Colonic mucosa (tissue), 4 donors: ENCODE measurements at regions of chr4 and their contacts with region 1.

Region 1: GRCh38 chr4:40311811-40312346 is 23.3 kb upstream of the CHRNA9 start:
- DNase-seq: no peak
- H3K4me3 ChIP-seq: no peak overlapping the region
- H3K27ac ChIP-seq: no peak overlapping the region
- H3K4me1 ChIP-seq: peaks cover 4% of the 10 kb centered on the region
- H3K27me3 ChIP-seq: no peaks in the 10 kb centered on the region
- CTCF ChIP-seq: no peak

Region 2: DNA sequence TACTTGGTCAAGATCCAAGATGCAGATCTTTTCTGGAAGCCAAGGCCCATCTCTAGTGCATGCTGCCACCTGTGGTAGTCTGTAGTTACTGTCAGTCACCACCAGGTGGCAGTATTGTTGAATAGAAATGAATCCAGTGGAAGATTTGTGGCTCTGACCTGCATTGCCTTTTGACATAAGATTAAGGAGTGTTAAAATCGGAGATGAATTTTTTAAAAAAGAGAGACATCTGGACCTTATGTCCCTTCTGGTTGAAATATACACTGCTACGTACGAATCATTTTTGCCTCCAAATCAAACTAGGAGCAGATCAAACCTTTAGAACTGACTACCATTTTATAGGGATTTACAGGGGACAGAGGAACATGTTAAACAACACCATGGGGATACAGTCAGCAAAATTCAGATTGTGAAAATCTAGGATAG is 161.9 kb before region 1 on chr4:
- intact Hi-C with region 1: loop called (anchors 2 kb)
- DNase-seq: peak; percentile 78
- H3K4me3 ChIP-seq: no peak overlapping the region
- H3K27ac ChIP-seq: no peak overlapping the region
- H3K4me1 ChIP-seq: no peaks in the 10 kb centered on the region
- H3K27me3 ChIP-seq: no peaks in the 10 kb centered on the region
- CTCF ChIP-seq: peak; percentile 85

Region 3: GRCh38 chr4:40228497-40229365 is 83.1 kb before region 1 on chr4:
- intact Hi-C with region 1: no loop called
- DNase-seq: no peak
- H3K4me3 ChIP-seq: no peak overlapping the region
- H3K27ac ChIP-seq: no peak overlapping the region
- H3K4me1 ChIP-seq: no peaks in the 10 kb centered on the region
- H3K27me3 ChIP-seq: no peaks in the 10 kb centered on the region
- CTCF ChIP-seq: peak; percentile 37

Region 4: GRCh38 chr4:40369437-40370274 is 57.8 kb after region 1 on chr4:
- intact Hi-C with region 1: no loop called
- DNase-seq: peak; percentile 85
- H3K4me3 ChIP-seq: no peak overlapping the region
- H3K27ac ChIP-seq: peak overlapping the region; percentile 79
- H3K4me1 ChIP-seq: no peaks in the 10 kb centered on the region
- H3K27me3 ChIP-seq: no peaks in the 10 kb centered on the region
- CTCF ChIP-seq: no peak

Region 5: GRCh38 chr4:40486534-40486933 is 174.7 kb after region 1 on chr4:
- intact Hi-C with region 1: no loop called
- DNase-seq: no peak
- H3K4me3 ChIP-seq: no peak overlapping the region
- H3K27ac ChIP-seq: no peak overlapping the region
- H3K4me1 ChIP-seq: peaks cover 2% of the 10 kb centered on the region
- H3K27me3 ChIP-seq: no peaks in the 10 kb centered on the region
- CTCF ChIP-seq: no peak